CD4-positive, alpha-beta memory T cell (primary cell): ENCODE measurements at regions of chr11 and their contacts with region 1.

Region 1: DNA sequence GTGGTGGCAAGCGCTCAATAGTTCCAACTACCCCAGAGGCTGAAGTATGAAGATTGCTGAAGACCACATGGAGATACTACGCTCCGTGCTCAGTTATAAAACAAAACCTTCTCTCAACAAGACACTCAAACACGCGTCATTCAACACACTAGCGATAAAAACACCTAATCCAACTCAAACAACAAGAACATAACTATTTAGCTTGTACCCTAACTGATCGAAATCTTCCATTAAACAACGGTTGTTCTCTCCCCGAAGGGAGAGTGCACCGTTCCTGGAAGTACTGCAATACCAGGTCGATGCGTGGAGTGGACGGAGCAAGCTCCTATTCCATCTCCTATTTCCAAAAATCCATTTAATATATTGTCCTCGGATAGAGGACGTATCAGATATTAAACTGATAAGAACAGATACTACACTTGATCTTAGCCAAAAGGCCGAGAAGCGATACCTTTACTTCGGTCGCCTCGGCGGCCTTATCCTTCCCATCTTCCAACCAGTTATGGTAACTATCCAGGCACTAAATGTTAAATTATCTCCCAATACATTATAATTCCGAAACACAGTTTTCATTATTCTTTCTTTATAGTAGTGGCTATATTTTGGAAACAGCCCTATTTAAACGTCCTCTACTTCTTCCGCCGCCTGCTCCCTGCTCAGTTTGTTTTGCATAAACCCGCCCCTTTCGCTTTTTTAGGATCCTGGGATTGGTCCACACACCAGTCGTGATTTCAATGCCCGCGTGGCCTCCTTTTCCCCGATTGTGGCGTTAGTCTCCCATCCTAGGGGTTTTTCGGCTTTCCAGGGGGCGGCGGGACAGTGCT is 2.2 kb upstream of the WDR74 start:
- DNase-seq: peak; percentile 88 to 92 (median 90)
- H3K4me3 ChIP-seq: peak overlapping the region; percentile 74 to 86
- H3K4me3 Mint-ChIP-seq: no peak overlapping the region
- H3K27ac ChIP-seq: peak overlapping the region; percentile 98
- H3K27ac Mint-ChIP-seq: no peak overlapping the region
- H3K4me1 ChIP-seq: peaks cover 32% of the 10 kb centered on the region
- H3K4me1 Mint-ChIP-seq: peaks cover 10 to 34% (median 21%) of the 10 kb centered on the region in 4 donors
- H3K27me3 ChIP-seq: no peaks in the 10 kb centered on the region
- H3K27me3 Mint-ChIP-seq: no peaks in the 10 kb centered on the region

Region 2: GRCh38 chr11:62573592-62574362 is 267.8 kb before region 1 on chr11 and contains the start of gene EEF1G:
- CTCF ChIA-PET with region 1: no interaction called
- POLR2A ChIA-PET with region 1: interaction called, 25 read pairs
- intact Hi-C with region 1: no loop called
- DNase-seq: peak; percentile 98 to 100 (median 100)
- H3K4me3 ChIP-seq: peak within 1 kb of the TSS; percentile 89 to 100
- H3K4me3 Mint-ChIP-seq: peak within 1 kb of the TSS; percentile 92 to 98 (median 98)
- H3K27ac ChIP-seq: peak within 1 kb of the TSS; percentile 77
- H3K27ac Mint-ChIP-seq: peak within 1 kb of the TSS; percentile 94 to 98 (median 97)
- H3K4me1 ChIP-seq: peaks cover 44% of the 10 kb centered on the region
- H3K4me1 Mint-ChIP-seq: peaks cover 34 to 60% (median 47%) of the 10 kb centered on the region in 4 donors
- H3K27me3 ChIP-seq: no peaks in the 10 kb centered on the region
- H3K27me3 Mint-ChIP-seq: no peaks in the 10 kb centered on the region
- total RNA-seq, gene EEF1G: 1,815 to 1,855 TPM

Region 3: GRCh38 chr11:62645956-62646824 is 195.4 kb before region 1 on chr11 and contains the start of gene GANAB:
- CTCF ChIA-PET with region 1: no interaction called
- POLR2A ChIA-PET with region 1: interaction called, 21 read pairs
- intact Hi-C with region 1: no loop called
- DNase-seq: peak; percentile 95 to 99 (median 97)
- H3K4me3 ChIP-seq: peak within 1 kb of the TSS; percentile 55 to 76
- H3K4me3 Mint-ChIP-seq: peak within 1 kb of the TSS; percentile 93 to 99 (median 95)
- H3K27ac ChIP-seq: peak within 1 kb of the TSS; percentile 92
- H3K27ac Mint-ChIP-seq: peak within 1 kb of the TSS; percentile 84 to 99 (median 97)
- H3K4me1 ChIP-seq: peaks cover 37% of the 10 kb centered on the region
- H3K4me1 Mint-ChIP-seq: peaks cover 14 to 48% (median 26%) of the 10 kb centered on the region in 4 donors
- H3K27me3 ChIP-seq: no peaks in the 10 kb centered on the region
- H3K27me3 Mint-ChIP-seq: no peaks in the 10 kb centered on the region
- total RNA-seq, gene GANAB: 260 to 262 TPM

Region 4: DNA sequence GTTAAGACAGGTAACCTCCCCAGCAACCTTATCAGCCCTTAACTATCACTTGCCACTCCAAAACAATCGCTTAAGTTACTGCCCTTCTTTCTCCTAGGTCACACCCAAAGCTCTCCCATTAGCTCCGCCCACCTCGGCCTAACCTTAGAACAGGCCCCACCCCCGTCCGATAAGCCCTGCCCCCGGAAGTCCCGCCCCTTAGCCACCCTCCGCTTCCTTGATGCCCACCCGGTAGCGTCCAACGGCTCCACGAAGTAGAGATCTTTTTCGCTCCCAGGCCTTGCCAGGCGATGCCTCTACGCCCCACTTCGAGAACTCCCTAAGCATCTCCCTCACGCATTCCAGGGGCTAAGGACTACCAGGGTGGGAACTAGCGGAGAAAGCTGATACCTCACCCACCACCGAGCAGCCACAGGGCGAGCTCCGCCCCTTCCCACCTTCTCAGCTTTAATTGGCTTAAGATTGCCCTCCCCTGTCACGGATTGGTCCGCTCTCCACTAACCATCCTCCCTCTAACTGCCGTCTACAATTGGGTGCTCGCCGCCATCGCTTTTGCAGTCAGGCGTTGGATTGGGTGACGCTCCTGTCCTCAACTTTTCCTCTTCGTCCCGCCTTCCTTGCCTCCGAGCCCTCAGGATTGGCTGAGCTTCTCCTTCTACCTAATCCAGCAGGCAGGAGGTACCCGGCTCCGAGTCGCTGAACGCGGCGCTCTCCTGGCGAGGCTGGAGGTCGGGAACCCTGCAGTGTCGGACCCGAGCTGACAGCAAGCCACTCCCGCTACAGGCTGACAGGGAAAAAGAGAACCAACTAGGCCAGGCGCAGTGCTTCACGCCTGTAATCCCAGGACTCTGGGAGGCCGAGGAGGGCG is 87.6 kb before region 1 on chr11 and contains the start of gene ZBTB3:
- CTCF ChIA-PET with region 1: no interaction called
- POLR2A ChIA-PET with region 1: interaction called, 126 read pairs
- intact Hi-C with region 1: no loop called
- DNase-seq: peak; percentile 99
- H3K4me3 ChIP-seq: peak within 1 kb of the TSS; percentile 68 to 98
- H3K4me3 Mint-ChIP-seq: peak within 1 kb of the TSS; percentile 96 to 99 (median 98)
- H3K27ac ChIP-seq: peak within 1 kb of the TSS; percentile 90
- H3K27ac Mint-ChIP-seq: peak within 1 kb of the TSS; percentile 94 to 100 (median 99)
- H3K4me1 ChIP-seq: peaks cover 45% of the 10 kb centered on the region
- H3K4me1 Mint-ChIP-seq: peaks cover 15 to 41% (median 25%) of the 10 kb centered on the region in 4 donors
- H3K27me3 ChIP-seq: no peaks in the 10 kb centered on the region
- H3K27me3 Mint-ChIP-seq: no peaks in the 10 kb centered on the region
- total RNA-seq, gene ZBTB3: 27.2 to 27.9 TPM

Region 5: GRCh38 chr11:62805076-62805892 is 36.3 kb before region 1 on chr11 and contains the start of gene NXF1:
- CTCF ChIA-PET with region 1: interaction called, 3 read pairs
- POLR2A ChIA-PET with region 1: interaction called, 801 read pairs
- intact Hi-C with region 1: loop called (anchors 1 kb)
- DNase-seq: peak; percentile 90 to 98 (median 96)
- H3K4me3 ChIP-seq: peak within 1 kb of the TSS; percentile 87 to 93
- H3K4me3 Mint-ChIP-seq: peak within 1 kb of the TSS; percentile 97 to 100 (median 99)
- H3K27ac ChIP-seq: peak within 1 kb of the TSS; percentile 94
- H3K27ac Mint-ChIP-seq: peak within 1 kb of the TSS; percentile 97 to 100 (median 99)
- H3K4me1 ChIP-seq: peaks cover 22% of the 10 kb centered on the region
- H3K4me1 Mint-ChIP-seq: peaks cover 20 to 43% (median 31%) of the 10 kb centered on the region in 4 donors
- H3K27me3 ChIP-seq: no peaks in the 10 kb centered on the region
- H3K27me3 Mint-ChIP-seq: peaks cover 0 to 2% of the 10 kb centered on the region in 2 donors
- total RNA-seq, gene NXF1: 195 to 196 TPM

Region 6: DNA sequence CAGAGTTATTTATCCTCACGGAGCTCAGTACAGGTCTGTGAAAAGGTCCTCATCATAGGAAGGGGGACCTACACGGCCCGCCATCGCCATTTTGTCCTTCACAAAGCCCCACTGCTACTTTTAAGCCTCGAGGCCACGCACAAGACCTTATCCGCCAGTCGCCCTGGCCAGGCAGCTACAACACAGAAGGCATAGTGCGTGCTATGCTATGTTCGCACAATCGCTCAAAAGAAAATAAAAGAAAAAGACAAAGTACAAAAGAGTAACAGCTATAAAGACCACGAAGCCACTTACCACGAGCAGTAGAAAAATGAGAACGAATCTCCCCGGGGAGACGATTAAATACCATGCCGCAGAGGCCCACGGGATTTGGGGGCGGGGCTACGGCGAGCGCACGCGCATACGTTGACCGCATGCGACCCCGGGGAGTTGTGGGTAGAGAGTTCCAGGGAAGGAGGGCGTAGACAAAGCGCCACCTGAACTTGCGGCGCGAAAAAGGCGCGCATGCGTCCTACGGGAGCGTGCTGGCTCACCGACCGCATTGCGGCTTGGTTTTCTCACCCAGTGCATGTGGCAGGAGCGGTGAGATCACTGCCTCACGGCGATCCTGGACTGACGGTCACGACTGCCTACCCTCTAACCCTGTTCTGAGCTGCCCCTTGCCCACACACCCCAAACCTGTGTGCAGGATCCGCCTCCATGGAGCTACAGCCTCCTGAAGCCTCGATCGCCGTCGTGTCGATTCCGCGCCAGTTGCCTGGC is 14.2 kb after region 1 on chr11:
- CTCF ChIA-PET with region 1: interaction called, 9 read pairs
- POLR2A ChIA-PET with region 1: interaction called, 667 read pairs
- intact Hi-C with region 1: loop called (anchors 1 kb)
- DNase-seq: peak; percentile 98 to 99 (median 99)
- H3K4me3 ChIP-seq: peak overlapping the region; percentile 89 to 91
- H3K4me3 Mint-ChIP-seq: peak overlapping the region; percentile 95 to 99 (median 96)
- H3K27ac ChIP-seq: peak overlapping the region; percentile 78
- H3K27ac Mint-ChIP-seq: peak overlapping the region; percentile 93 to 98 (median 95)
- H3K4me1 ChIP-seq: peaks cover 57% of the 10 kb centered on the region
- H3K4me1 Mint-ChIP-seq: peaks cover 41 to 67% (median 55%) of the 10 kb centered on the region in 4 donors
- H3K27me3 ChIP-seq: no peaks in the 10 kb centered on the region
- H3K27me3 Mint-ChIP-seq: no peaks in the 10 kb centered on the region

Region 7: GRCh38 chr11:63023841-63024648 is 182.5 kb after region 1 on chr11:
- CTCF ChIA-PET with region 1: no interaction called
- POLR2A ChIA-PET with region 1: no interaction called
- intact Hi-C with region 1: no loop called
- DNase-seq: peak; percentile 68 to 76 (median 72)
- H3K4me3 ChIP-seq: no peak overlapping the region
- H3K4me3 Mint-ChIP-seq: peak overlapping the region in 2 of 8 donors; percentile 1 to 20
- H3K27ac ChIP-seq: no peak overlapping the region
- H3K27ac Mint-ChIP-seq: no peak overlapping the region
- H3K4me1 ChIP-seq: no peaks in the 10 kb centered on the region
- H3K4me1 Mint-ChIP-seq: peaks cover 0 to 4% (median 2%) of the 10 kb centered on the region in 4 donors
- H3K27me3 ChIP-seq: no peaks in the 10 kb centered on the region
- H3K27me3 Mint-ChIP-seq: peaks cover 8 to 25% of the 10 kb centered on the region in 2 donors